ENCODE measurements at regions of chr1 and their contacts with region 1.

Region 1: GRCh38 chr1:37692078-37692833 is at the start of gene CDCA8:
- DNase-seq: peak; percentile 98
- H3K4me3 ChIP-seq: peak within 1 kb of the TSS; percentile 85 to 86
- H3K4me3 Mint-ChIP-seq: peak within 1 kb of the TSS; percentile 92 to 97 (median 96)
- H3K27ac ChIP-seq: peak within 1 kb of the TSS; percentile 67
- H3K27ac Mint-ChIP-seq: peak within 1 kb of the TSS; percentile 87 to 97 (median 95)
- H3K4me1 ChIP-seq: peaks cover 32% of the 10 kb centered on the region
- H3K4me1 Mint-ChIP-seq: peaks cover 21 to 45% (median 35%) of the 10 kb centered on the region in 4 donors
- H3K27me3 ChIP-seq: no peaks in the 10 kb centered on the region
- H3K27me3 Mint-ChIP-seq: no peaks in the 10 kb centered on the region
- total RNA-seq, gene CDCA8: 0.61 to 1.3 TPM

Region 2: DNA sequence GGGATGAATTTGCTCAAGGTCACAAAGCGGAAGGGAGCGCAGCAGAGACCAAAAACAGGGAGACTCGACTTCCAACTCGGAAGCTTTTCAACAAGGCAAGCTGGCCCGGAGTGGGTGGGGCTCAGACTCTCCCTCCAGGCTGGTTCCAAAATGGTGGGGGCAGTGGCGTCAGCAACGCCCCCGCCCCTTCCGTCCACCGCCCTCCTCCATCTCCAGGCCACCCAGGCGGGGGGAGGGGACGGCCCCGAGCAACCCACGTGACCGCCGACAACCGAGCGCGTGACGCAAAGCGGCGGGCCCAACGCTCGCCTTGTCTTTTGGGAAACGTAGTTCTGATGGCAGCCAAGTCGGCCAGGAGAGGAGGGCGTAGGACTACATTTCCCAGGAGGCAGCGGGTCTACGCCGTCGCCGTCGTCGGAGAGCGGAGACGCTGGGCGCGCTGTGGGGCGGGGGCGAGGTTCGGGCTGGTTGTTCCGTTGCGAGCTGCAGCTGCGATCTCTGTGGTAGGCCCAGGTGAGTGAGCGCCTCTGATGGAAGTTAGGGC is 1468.2 kb before region 1 on chr1 and contains the start of gene THRAP3:
- CTCF ChIA-PET with region 1: no interaction called
- POLR2A ChIA-PET with region 1: no interaction called
- intact Hi-C with region 1: loop called (anchors 5 kb)
- DNase-seq: peak; percentile 100
- H3K4me3 ChIP-seq: peak within 1 kb of the TSS; percentile 77 to 97
- H3K4me3 Mint-ChIP-seq: peak within 1 kb of the TSS; percentile 95 to 99 (median 98)
- H3K27ac ChIP-seq: peak within 1 kb of the TSS; percentile 98
- H3K27ac Mint-ChIP-seq: peak within 1 kb of the TSS; percentile 97 to 100 (median 100)
- H3K4me1 ChIP-seq: peaks cover 45% of the 10 kb centered on the region
- H3K4me1 Mint-ChIP-seq: peaks cover 19 to 46% (median 29%) of the 10 kb centered on the region in 4 donors
- H3K27me3 ChIP-seq: no peaks in the 10 kb centered on the region
- H3K27me3 Mint-ChIP-seq: no peaks in the 10 kb centered on the region
- total RNA-seq, gene THRAP3: 127 to 130 TPM

Region 3: DNA sequence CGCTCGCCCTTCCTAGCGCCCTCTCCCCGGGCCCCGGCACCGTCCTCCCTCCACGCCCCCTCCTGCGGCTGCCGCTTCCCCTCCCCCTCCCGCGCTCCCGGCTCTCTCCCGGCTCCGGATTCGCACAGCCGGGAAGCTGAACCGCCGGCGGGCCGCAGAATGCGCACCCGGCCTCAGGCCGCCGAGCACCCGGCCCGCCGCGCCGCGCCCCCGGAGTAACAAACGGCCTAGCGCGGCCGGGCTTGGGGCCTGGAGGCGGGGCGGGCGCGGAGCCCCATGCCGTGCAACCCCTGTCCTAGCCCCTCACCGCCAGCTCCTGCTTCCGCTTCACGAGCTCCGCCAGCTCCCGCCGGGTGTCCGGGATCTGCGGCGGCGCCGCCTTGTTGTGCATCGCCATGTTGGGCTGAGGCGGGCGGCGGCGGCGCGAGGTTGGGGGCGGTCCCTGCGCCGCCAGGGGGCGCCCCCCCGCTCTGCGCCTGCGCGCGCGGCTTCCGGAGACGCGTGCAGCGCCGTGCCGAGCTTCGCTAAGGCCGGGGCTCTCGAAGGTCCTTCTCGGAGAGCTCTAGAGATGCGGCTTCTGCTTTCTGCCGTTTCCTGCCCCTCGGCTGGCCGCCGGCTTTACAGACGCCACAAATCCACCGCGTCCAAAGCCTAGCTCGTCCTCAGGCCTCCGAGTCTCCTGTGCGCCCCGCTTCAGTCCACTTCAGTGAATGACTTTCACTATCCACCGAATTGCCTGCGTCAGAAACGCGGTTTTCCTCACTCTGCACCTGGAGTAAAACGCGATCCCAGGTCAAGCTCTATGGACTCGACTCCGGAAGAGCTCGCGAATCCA is 177.7 kb before region 1 on chr1 and contains the start of gene MEAF6:
- CTCF ChIA-PET with region 1: interaction called, 7 read pairs
- POLR2A ChIA-PET with region 1: interaction called, 17 read pairs
- intact Hi-C with region 1: no loop called
- DNase-seq: peak; percentile 81 to 88 (median 85)
- H3K4me3 ChIP-seq: peak within 1 kb of the TSS; percentile 74
- H3K4me3 Mint-ChIP-seq: peak within 1 kb of the TSS; percentile 97 to 99 (median 98)
- H3K27ac ChIP-seq: peak within 1 kb of the TSS; percentile 82
- H3K27ac Mint-ChIP-seq: peak within 1 kb of the TSS; percentile 96 to 99 (median 99)
- H3K4me1 ChIP-seq: peaks cover 34% of the 10 kb centered on the region
- H3K4me1 Mint-ChIP-seq: peaks cover 27 to 49% (median 38%) of the 10 kb centered on the region in 4 donors
- H3K27me3 ChIP-seq: no peaks in the 10 kb centered on the region
- H3K27me3 Mint-ChIP-seq: no peaks in the 10 kb centered on the region
- total RNA-seq, gene MEAF6: 97.9 to 98.2 TPM

Region 4: DNA sequence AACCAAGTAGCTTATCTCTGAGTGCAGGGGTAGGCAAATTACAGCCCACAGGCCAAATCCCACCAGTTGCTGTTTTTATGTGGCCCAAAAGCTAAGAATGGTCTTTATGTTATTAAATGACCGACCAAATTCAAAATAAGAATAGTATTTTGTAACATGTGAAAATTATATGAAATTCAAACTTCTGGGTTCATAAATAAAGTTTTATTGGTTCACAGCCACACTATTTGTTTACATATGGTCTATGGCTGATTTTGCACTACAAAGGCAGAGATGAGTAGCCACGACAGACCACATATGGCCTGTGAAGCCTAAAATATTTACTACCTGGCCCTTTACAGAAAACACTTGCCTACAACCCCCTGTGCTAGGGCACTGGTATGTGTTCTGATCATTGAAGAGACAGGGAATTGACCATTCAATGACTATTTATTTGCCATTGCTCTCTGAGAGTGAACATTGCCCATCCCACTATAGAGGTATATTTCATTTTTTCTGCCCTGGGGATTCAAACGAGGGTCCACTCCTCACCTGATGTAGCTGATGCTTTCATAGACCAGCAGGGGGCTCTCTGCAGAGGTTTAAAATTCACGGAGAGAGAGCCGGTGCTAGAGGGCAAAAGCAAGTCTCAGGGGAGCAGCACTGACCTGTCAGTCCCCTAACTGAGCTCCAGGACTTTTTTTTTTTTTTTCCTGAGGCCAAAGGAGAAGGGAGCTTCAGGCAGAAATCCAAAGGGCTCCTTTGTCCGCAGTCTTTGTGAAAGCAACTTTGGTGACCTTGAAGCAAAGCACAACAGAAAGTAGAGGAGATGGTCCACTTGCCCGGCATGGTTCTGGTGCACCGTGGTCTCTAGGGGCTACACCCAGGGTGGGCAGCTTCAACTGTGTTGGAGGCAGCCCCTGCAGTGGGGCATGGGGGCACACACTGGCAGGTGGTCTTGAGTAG is 89.2 kb before region 1 on chr1:
- CTCF ChIA-PET with region 1: interaction called, 228 read pairs
- POLR2A ChIA-PET with region 1: interaction called, 3 read pairs
- intact Hi-C with region 1: no loop called
- DNase-seq: peak in 4 of 5 donors; percentile 47 to 58 (median 54)
- H3K4me3 ChIP-seq: no peak overlapping the region
- H3K4me3 Mint-ChIP-seq: no peak overlapping the region
- H3K27ac ChIP-seq: no peak overlapping the region
- H3K27ac Mint-ChIP-seq: peak overlapping the region in 1 of 7 donors; percentile 11
- H3K4me1 ChIP-seq: no peaks in the 10 kb centered on the region
- H3K4me1 Mint-ChIP-seq: peaks cover 0 to 7% (median 0%) of the 10 kb centered on the region in 4 donors
- H3K27me3 ChIP-seq: no peaks in the 10 kb centered on the region
- H3K27me3 Mint-ChIP-seq: peaks cover 5% of the 10 kb centered on the region in 2 donors

Region 5: GRCh38 chr1:37661401-37661800 is 30.9 kb before region 1 on chr1:
- CTCF ChIA-PET with region 1: no interaction called
- POLR2A ChIA-PET with region 1: no interaction called
- intact Hi-C with region 1: no loop called
- DNase-seq: no peak
- H3K4me3 ChIP-seq: no peak overlapping the region
- H3K4me3 Mint-ChIP-seq: no peak overlapping the region
- H3K27ac ChIP-seq: no peak overlapping the region
- H3K27ac Mint-ChIP-seq: no peak overlapping the region
- H3K4me1 ChIP-seq: no peaks in the 10 kb centered on the region
- H3K4me1 Mint-ChIP-seq: no peaks in the 10 kb centered on the region
- H3K27me3 ChIP-seq: no peaks in the 10 kb centered on the region
- H3K27me3 Mint-ChIP-seq: peaks cover 7 to 8% of the 10 kb centered on the region in 2 donors

Region 6: GRCh38 chr1:37859507-37860345 is 167.5 kb after region 1 on chr1 and contains the start of gene MTF1:
- CTCF ChIA-PET with region 1: interaction called, 8 read pairs
- POLR2A ChIA-PET with region 1: interaction called, 24 read pairs
- intact Hi-C with region 1: loop called (anchors 1 kb)
- DNase-seq: peak; percentile 96 to 98 (median 97)
- H3K4me3 ChIP-seq: peak within 1 kb of the TSS; percentile 80 to 86
- H3K4me3 Mint-ChIP-seq: peak within 1 kb of the TSS; percentile 94 to 100 (median 96)
- H3K27ac ChIP-seq: peak within 1 kb of the TSS; percentile 96
- H3K27ac Mint-ChIP-seq: peak within 1 kb of the TSS; percentile 80 to 98 (median 97)
- H3K4me1 ChIP-seq: peaks cover 39% of the 10 kb centered on the region
- H3K4me1 Mint-ChIP-seq: peaks cover 19 to 39% (median 24%) of the 10 kb centered on the region in 4 donors
- H3K27me3 ChIP-seq: no peaks in the 10 kb centered on the region
- H3K27me3 Mint-ChIP-seq: no peaks in the 10 kb centered on the region
- total RNA-seq, gene MTF1: 30.1 to 32.5 TPM

Region 7: DNA sequence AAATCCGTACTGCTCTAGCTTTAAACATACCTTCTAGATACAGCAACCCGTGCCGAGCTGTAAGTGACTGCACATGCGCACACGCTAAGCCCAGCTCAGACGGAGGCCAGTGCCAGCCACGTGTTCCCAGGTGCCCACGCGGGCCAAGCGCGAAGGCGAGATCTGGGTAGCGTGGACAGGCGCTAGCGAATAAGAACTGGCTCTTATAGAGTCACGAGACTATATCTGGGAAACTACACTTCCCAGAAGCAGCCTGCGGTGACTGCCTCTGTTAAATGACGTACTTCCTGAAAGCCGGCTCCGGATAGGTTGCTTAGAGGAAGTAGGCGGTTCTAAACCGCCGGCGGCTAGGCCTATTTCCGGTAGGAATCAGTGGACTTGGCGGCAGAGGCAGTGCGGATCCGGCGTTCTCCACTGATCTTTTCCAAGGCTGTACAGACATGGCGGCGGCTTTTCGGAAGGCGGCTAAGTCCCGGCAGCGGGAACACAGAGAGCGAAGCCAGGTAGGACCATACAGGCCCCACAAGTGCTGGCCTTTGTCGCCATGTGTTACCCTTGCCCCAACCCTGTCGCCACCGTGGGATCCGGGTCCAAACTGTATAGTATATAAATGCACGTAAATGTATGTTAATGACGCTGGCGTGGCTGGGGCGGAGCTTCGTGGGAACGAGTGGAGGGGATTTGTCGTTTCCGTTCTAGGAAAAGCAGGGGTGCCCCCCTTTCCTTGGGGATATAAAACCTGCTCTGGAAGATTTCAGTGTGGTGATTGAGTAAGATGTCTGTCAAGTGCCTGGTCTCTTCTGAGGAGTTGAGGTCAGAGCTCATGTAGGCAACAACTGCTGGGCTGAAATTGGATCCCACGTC is 320.3 kb after region 1 on chr1 and contains the start of gene UTP11:
- CTCF ChIA-PET with region 1: no interaction called
- POLR2A ChIA-PET with region 1: no interaction called
- intact Hi-C with region 1: loop called (anchors 1 kb)
- DNase-seq: peak; percentile 91 to 96 (median 93)
- H3K4me3 ChIP-seq: peak within 1 kb of the TSS; percentile 72 to 94
- H3K4me3 Mint-ChIP-seq: peak within 1 kb of the TSS; percentile 91 to 100 (median 98)
- H3K27ac ChIP-seq: peak within 1 kb of the TSS; percentile 87
- H3K27ac Mint-ChIP-seq: peak within 1 kb of the TSS; percentile 92 to 100 (median 99)
- H3K4me1 ChIP-seq: peaks cover 29% of the 10 kb centered on the region
- H3K4me1 Mint-ChIP-seq: peaks cover 19 to 46% (median 34%) of the 10 kb centered on the region in 4 donors
- H3K27me3 ChIP-seq: no peaks in the 10 kb centered on the region
- H3K27me3 Mint-ChIP-seq: no peaks in the 10 kb centered on the region
- total RNA-seq, gene UTP11: 17.3 to 17.5 TPM

Measured in CD4-positive, alpha-beta memory T cell (primary cell).